Mammary epithelial cell (primary cell): ENCODE measurements at regions of chrX and their contacts with region 1.

Region 1: GRCh38 chrX:23483396-23483795 is 148.7 kb downstream of the PTCHD1 start:
- DNase-seq: no peak
- H3K4me3 ChIP-seq: no peak overlapping the region
- H3K27ac ChIP-seq: no peak overlapping the region
- H3K4me1 ChIP-seq: no peaks in the 10 kb centered on the region
- H3K27me3 ChIP-seq: no peaks in the 10 kb centered on the region
- CTCF ChIP-seq: no peak

Region 2: DNA sequence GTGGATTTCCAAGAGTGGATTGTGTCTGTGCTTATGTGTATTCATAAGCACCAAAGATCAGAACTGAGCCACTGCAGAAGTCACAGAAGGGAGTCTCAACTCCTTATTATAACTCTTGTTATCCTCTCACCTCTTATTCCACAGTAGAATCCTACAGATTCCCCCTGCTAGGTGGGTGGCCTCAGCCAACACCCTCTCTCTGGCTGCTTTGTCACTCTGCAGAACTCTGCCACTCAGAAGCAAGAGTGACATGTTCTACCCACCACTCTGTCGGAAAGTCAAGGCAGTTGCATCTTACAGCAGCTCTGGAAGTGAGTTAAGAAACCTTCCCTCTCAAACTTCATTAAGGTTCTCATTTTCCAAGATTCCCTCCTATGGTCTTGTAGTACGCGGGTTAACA is 106.8 kb before region 1 on chrX:
- CTCF ChIA-PET with region 1: no interaction called
- dilution Hi-C with region 1: loop called (anchors 5 kb)
- in situ Hi-C with region 1: no loop called
- intact Hi-C with region 1: no loop called
- DNase-seq: no peak
- H3K4me3 ChIP-seq: no peak overlapping the region
- H3K27ac ChIP-seq: no peak overlapping the region
- H3K4me1 ChIP-seq: peaks cover 6% of the 10 kb centered on the region
- H3K27me3 ChIP-seq: peaks cover 12% of the 10 kb centered on the region
- CTCF ChIP-seq: no peak